Aorta (tissue), 5 donors: ENCODE measurements at regions of chr14 and their contacts with region 1.

Region 1: DNA sequence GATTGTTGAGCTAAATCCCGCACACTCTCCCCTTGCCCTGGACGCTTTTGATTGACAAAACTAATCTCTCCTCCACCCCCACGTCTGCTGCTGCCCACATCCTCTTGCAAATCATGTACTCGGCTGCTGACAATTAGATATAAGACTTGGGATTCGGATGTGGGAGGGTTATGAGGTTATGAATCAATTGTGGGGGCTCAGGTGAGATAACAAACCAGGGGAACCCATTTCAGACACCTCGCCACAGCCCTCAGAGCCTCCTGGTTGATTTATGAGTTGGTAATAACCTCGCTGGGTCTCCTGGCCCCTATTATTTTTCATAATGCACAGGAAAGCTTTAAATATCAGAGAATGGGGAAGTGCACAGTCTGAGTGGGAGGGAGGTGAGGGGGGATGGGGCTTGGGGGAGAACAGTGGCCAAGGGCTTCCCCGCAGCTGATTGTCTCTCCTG is 449.9 kb downstream of the DPF3 start:
- DNase-seq: no peak
- ATAC-seq: no peak
- H3K4me3 ChIP-seq: no peak overlapping the region
- H3K27ac ChIP-seq: no peak overlapping the region
- H3K4me1 ChIP-seq: no peaks in the 10 kb centered on the region
- H3K27me3 ChIP-seq: no peaks in the 10 kb centered on the region

Region 2: GRCh38 chr14:72462045-72462444 is 18.0 kb after region 1 on chr14:
- intact Hi-C with region 1: loop called in 1 of 2 experiments (anchors 1 kb)
- DNase-seq: no peak
- ATAC-seq: no peak
- H3K4me3 ChIP-seq: no peak overlapping the region
- H3K27ac ChIP-seq: no peak overlapping the region
- H3K4me1 ChIP-seq: no peaks in the 10 kb centered on the region
- H3K27me3 ChIP-seq: no peaks in the 10 kb centered on the region

Region 3: GRCh38 chr14:72714094-72714493 is 270.1 kb after region 1 on chr14:
- intact Hi-C with region 1: no loop called
- DNase-seq: no peak
- ATAC-seq: no peak
- H3K4me3 ChIP-seq: no peak overlapping the region
- H3K27ac ChIP-seq: no peak overlapping the region
- H3K4me1 ChIP-seq: no peaks in the 10 kb centered on the region
- H3K27me3 ChIP-seq: no peaks in the 10 kb centered on the region

Region 4: GRCh38 chr14:72855913-72856312 is 411.9 kb after region 1 on chr14:
- intact Hi-C with region 1: no loop called
- DNase-seq: no peak
- ATAC-seq: no peak
- H3K4me3 ChIP-seq: no peak overlapping the region
- H3K27ac ChIP-seq: no peak overlapping the region
- H3K4me1 ChIP-seq: peaks cover 0 to 3% of the 10 kb centered on the region in 2 donors
- H3K27me3 ChIP-seq: no peaks in the 10 kb centered on the region